B cell (primary cell): ENCODE measurements at regions of chr7 and their contacts with region 1.

Region 1: DNA sequence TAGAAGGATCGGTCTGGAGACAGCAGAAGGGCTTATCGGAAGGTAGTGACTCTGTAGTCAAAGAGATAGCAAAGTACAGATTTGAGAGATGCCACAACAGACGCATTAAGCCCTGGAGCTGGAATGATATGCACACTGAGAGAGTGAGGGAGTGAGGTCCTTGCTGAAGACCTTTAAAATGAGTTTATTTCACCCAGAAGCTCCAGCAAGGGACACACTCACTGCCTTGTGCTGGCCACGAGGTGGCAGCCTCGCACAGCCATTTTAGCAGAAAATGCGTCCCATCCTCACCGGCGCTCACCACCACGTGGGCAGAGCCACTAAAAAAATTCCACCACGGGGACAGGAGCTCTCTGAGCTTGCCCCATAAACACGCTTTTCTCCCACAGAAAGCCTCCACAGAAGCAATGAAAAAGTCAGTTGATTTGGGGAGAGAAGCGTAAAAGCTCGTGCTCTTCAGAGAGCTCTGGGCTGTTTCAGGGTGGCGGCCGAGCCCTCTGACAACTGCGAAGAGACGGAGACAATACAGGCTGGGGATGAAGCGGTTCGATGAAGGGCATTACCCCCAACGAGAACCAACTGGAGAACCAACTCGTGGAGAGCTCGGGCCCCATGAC is 163.0 kb upstream of the KLF14 start:
- DNase-seq: peak; percentile 85
- ATAC-seq: peak; percentile 77
- H3K4me3 ChIP-seq: no peak overlapping the region
- H3K4me3 Mint-ChIP-seq: peak overlapping the region; percentile 30
- H3K27ac ChIP-seq: peak overlapping the region in 1 of 2 donors; percentile 21
- H3K27ac Mint-ChIP-seq: peak overlapping the region; percentile 84
- H3K4me1 ChIP-seq: peaks cover 23 to 54% of the 10 kb centered on the region in 2 donors
- H3K4me1 Mint-ChIP-seq: peaks cover 71% of the 10 kb centered on the region
- H3K27me3 ChIP-seq: no peaks in the 10 kb centered on the region
- H3K27me3 Mint-ChIP-seq: no peaks in the 10 kb centered on the region
- CTCF ChIP-seq: peak; percentile 83

Region 2: GRCh38 chr7:130606161-130606560 is 290.8 kb before region 1 on chr7:
- CTCF ChIA-PET with region 1: no interaction called
- POLR2A ChIA-PET with region 1: no interaction called
- intact Hi-C with region 1: no loop called
- DNase-seq: no peak
- ATAC-seq: no peak
- H3K4me3 ChIP-seq: no peak overlapping the region
- H3K4me3 Mint-ChIP-seq: no peak overlapping the region
- H3K27ac ChIP-seq: no peak overlapping the region
- H3K27ac Mint-ChIP-seq: no peak overlapping the region
- H3K4me1 ChIP-seq: no peaks in the 10 kb centered on the region
- H3K4me1 Mint-ChIP-seq: no peaks in the 10 kb centered on the region
- H3K27me3 ChIP-seq: no peaks in the 10 kb centered on the region
- H3K27me3 Mint-ChIP-seq: no peaks in the 10 kb centered on the region
- CTCF ChIP-seq: peak; percentile 25

Region 3: GRCh38 chr7:130822642-130823041 is 74.4 kb before region 1 on chr7:
- CTCF ChIA-PET with region 1: no interaction called
- POLR2A ChIA-PET with region 1: no interaction called
- intact Hi-C with region 1: no loop called
- DNase-seq: no peak
- ATAC-seq: no peak
- H3K4me3 ChIP-seq: no peak overlapping the region
- H3K4me3 Mint-ChIP-seq: no peak overlapping the region
- H3K27ac ChIP-seq: no peak overlapping the region
- H3K27ac Mint-ChIP-seq: no peak overlapping the region
- H3K4me1 ChIP-seq: no peaks in the 10 kb centered on the region
- H3K4me1 Mint-ChIP-seq: peaks cover 3% of the 10 kb centered on the region
- H3K27me3 ChIP-seq: no peaks in the 10 kb centered on the region
- H3K27me3 Mint-ChIP-seq: peaks cover 14% of the 10 kb centered on the region
- CTCF ChIP-seq: no peak

Region 4: DNA sequence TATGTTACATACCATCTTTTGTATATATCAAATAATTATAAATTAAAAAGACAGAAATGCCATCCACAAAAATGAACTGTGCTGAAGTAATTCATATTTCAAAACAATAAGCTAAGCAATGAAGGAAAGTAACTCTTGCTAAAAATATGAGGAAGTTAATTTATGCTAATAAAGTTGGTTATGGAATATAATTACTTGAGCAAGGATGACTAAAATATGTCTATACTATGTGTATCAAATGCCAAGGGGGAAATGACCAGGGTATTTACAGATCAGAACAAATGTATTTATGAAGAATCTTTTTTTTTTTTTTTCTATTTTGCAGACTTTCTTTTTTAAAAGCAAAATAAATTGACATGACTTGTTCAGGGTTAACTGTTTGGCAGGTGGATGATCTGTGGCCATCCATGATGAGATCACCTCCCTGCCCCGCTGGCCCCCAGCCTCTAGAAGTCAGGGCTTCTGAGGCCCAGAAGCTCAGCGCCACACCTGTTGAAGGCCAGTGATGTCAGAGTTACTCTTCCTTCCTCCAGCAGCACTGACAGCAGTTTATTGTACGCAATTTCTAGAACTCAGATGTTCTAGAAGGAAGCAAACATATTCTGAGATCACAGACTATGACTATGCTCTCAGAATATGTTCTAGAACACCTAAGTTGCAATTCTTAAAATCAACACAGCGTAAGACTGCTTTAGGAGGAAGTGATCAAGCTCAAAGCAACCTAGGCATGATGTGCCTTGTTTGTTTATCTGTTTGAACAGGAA is 33.1 kb after region 1 on chr7:
- CTCF ChIA-PET with region 1: interaction called, 12 read pairs
- POLR2A ChIA-PET with region 1: no interaction called
- intact Hi-C with region 1: no loop called
- DNase-seq: peak; percentile 81
- ATAC-seq: peak; percentile 57
- H3K4me3 ChIP-seq: no peak overlapping the region
- H3K4me3 Mint-ChIP-seq: peak overlapping the region; percentile 38
- H3K27ac ChIP-seq: peak overlapping the region; percentile 48 to 86
- H3K27ac Mint-ChIP-seq: peak overlapping the region; percentile 91
- H3K4me1 ChIP-seq: peaks cover 36 to 40% of the 10 kb centered on the region in 2 donors
- H3K4me1 Mint-ChIP-seq: peaks cover 71% of the 10 kb centered on the region
- H3K27me3 ChIP-seq: no peaks in the 10 kb centered on the region
- H3K27me3 Mint-ChIP-seq: no peaks in the 10 kb centered on the region
- CTCF ChIP-seq: no peak

Region 5: GRCh38 chr7:130982160-130982638 is 85.2 kb after region 1 on chr7:
- CTCF ChIA-PET with region 1: interaction called, 48 read pairs
- POLR2A ChIA-PET with region 1: no interaction called
- intact Hi-C with region 1: no loop called
- DNase-seq: peak; percentile 70
- ATAC-seq: peak; percentile 73
- H3K4me3 ChIP-seq: no peak overlapping the region
- H3K4me3 Mint-ChIP-seq: no peak overlapping the region
- H3K27ac ChIP-seq: peak overlapping the region; percentile 9 to 61
- H3K27ac Mint-ChIP-seq: no peak overlapping the region
- H3K4me1 ChIP-seq: peaks cover 13 to 16% of the 10 kb centered on the region in 2 donors
- H3K4me1 Mint-ChIP-seq: peaks cover 25% of the 10 kb centered on the region
- H3K27me3 ChIP-seq: no peaks in the 10 kb centered on the region
- H3K27me3 Mint-ChIP-seq: no peaks in the 10 kb centered on the region
- CTCF ChIP-seq: peak; percentile 87

Region 6: GRCh38 chr7:131040467-131040932 is 143.5 kb after region 1 on chr7:
- CTCF ChIA-PET with region 1: interaction called, 131 read pairs
- POLR2A ChIA-PET with region 1: interaction called, 5 read pairs
- intact Hi-C with region 1: loop called (anchors 1 kb)
- DNase-seq: peak; percentile 79
- ATAC-seq: peak; percentile 77
- H3K4me3 ChIP-seq: no peak overlapping the region
- H3K4me3 Mint-ChIP-seq: peak overlapping the region; percentile 44
- H3K27ac ChIP-seq: peak overlapping the region in 1 of 2 donors; percentile 6
- H3K27ac Mint-ChIP-seq: peak overlapping the region; percentile 55
- H3K4me1 ChIP-seq: peaks cover 5 to 23% of the 10 kb centered on the region in 2 donors
- H3K4me1 Mint-ChIP-seq: peaks cover 54% of the 10 kb centered on the region
- H3K27me3 ChIP-seq: no peaks in the 10 kb centered on the region
- H3K27me3 Mint-ChIP-seq: no peaks in the 10 kb centered on the region
- CTCF ChIP-seq: peak; percentile 98

Region 7: DNA sequence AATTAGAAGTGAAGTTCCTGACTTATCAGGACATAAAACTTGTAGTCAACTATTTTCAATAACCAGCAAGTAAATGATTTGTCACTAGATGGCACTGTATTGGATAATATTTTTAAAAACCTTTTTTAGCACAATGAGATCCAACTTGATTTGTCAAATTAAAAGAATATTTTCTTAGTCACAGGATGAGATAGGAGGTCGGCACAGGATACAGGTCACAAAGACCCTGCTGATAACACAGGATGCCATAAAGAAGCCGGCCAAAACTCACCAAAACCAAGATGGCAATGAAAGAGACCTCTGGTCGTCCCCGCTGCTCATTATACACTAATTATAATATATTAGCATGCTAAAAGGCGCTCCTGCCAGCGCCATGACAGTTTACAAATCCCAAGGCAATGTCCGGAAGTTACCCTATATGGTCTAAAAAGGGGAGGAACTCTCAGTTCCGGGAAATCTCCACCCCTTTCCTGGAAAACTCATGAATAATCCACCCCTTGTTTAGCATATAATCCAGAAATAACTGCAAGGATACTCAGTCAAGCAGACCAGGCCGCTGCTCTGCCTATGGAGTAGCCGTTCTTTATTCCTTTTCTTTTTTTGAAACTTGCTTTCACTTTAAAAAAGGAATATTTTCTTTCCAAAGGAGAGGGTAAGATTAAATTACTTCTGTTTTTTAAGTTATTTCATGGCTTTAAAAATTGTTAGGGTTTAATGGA is 174.9 kb after region 1 on chr7:
- CTCF ChIA-PET with region 1: interaction called, 12 read pairs
- POLR2A ChIA-PET with region 1: no interaction called
- intact Hi-C with region 1: no loop called
- DNase-seq: no peak
- ATAC-seq: no peak
- H3K4me3 ChIP-seq: no peak overlapping the region
- H3K4me3 Mint-ChIP-seq: no peak overlapping the region
- H3K27ac ChIP-seq: no peak overlapping the region
- H3K27ac Mint-ChIP-seq: no peak overlapping the region
- H3K4me1 ChIP-seq: peaks cover 38 to 48% of the 10 kb centered on the region in 2 donors
- H3K4me1 Mint-ChIP-seq: peaks cover 78% of the 10 kb centered on the region
- H3K27me3 ChIP-seq: no peaks in the 10 kb centered on the region
- H3K27me3 Mint-ChIP-seq: no peaks in the 10 kb centered on the region
- CTCF ChIP-seq: peak; percentile 65